GM13977 (cell line): ENCODE measurements at regions of chr19 and their contacts with region 1.

Region 1: DNA sequence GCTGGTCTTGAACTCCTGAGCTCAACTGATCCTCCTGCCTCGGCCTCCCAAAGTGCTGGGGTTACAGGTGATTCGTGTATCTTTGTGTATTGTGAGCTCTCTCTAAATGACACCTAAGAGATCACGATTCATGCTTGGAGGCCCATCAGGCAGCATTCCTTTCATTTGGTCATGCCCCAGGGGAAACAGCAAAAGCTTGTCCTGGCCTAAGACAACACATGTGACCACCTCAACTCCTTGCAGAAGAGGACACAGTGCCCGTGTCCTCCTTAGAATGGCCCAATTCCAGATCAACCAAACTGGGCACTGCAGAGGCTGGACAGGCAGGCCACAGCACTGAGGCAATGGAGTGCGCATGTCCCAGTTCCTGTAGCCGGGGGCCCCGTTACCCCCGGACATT is 32.5 kb downstream of the ZC3H4 start:
- DNase-seq: no peak
- CTCF ChIP-seq: no peak

Region 2: GRCh38 chr19:47124937-47125668 is 44.0 kb after region 1 on chr19:
- in situ Hi-C with region 1: loop called (anchors 5 kb)
- DNase-seq: peak; percentile 65
- CTCF ChIP-seq: peak; percentile 53